ENCODE measurements at regions of chr17 and their contacts with region 1.

Region 1: DNA sequence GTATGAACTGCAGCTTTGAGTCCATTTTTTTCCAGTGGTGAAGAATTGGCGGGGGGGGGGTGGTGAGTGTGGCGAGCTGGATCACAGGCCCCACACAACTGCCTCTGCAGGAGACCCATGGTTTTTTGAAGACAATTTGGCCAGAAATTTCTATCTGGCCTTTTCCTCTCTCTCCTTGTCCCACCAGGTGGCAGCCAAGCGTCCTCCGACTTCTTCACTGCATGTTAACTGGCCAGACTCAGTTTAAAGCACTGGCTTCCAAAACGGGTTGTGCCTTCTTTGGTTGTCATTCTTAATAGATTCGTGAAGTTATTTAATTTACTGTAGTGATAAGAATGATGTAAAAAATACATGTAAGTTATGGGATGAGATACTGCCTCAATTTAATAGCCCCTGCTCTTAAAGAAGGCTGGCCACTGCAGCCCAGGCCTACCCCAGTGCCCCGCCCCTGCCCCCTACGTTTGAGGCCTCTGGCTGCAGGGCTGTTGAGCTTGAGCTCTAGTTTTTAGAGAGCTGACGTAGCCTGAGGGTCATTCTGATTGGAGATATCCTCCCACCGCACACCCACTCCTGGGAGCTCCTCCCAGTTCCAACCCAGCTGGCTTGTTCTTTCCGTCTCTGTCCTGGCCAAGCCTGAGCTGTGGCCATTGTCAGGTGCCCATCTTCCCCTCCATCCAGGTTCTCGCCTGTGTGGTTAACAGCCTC is 36.4 kb downstream of the AKAP1 start:
- DNase-seq: peak in 4 of 5 donors; percentile 61 to 80 (median 66)
- H3K4me3 ChIP-seq: no peak overlapping the region
- H3K27ac ChIP-seq: no peak overlapping the region
- H3K4me1 ChIP-seq: no peaks in the 10 kb centered on the region
- H3K27me3 ChIP-seq: no peaks in the 10 kb centered on the region
- CTCF ChIP-seq: peak; percentile 26

Region 2: GRCh38 chr17:57833179-57833939 is 711.9 kb after region 1 on chr17:
- intact Hi-C with region 1: loop called (anchors 10 kb)
- DNase-seq: peak in 4 of 5 donors; percentile 68 to 89 (median 80)
- H3K4me3 ChIP-seq: peak overlapping the region; percentile 30 to 53 (median 43)
- H3K27ac ChIP-seq: peak overlapping the region; percentile 73 to 88
- H3K4me1 ChIP-seq: peaks cover 8 to 24% (median 23%) of the 10 kb centered on the region in 3 donors
- H3K27me3 ChIP-seq: no peaks in the 10 kb centered on the region
- CTCF ChIP-seq: peak; percentile 90

Measured in kidney (tissue), 22 donors.